ENCODE measurements at regions of chr1 and their contacts with region 1.

Region 1: GRCh38 chr1:85692730-85693314 is 15.4 kb downstream of the ZNHIT6 start:
- DNase-seq: no peak
- ATAC-seq: no peak
- H3K4me3 Mint-ChIP-seq: no peak overlapping the region
- H3K27ac Mint-ChIP-seq: peak overlapping the region; percentile 4
- H3K4me1 Mint-ChIP-seq: no peaks in the 10 kb centered on the region
- H3K27me3 Mint-ChIP-seq: no peaks in the 10 kb centered on the region
- CTCF ChIP-seq: no peak

Region 2: GRCh38 chr1:85344256-85344694 is 348.5 kb before region 1 on chr1:
- CTCF ChIA-PET with region 1: interaction called, 10 read pairs
- POLR2A ChIA-PET with region 1: no interaction called
- DNase-seq: peak; percentile 71
- ATAC-seq: peak; percentile 99
- H3K4me3 Mint-ChIP-seq: no peak overlapping the region
- H3K27ac Mint-ChIP-seq: peak overlapping the region; percentile 92
- H3K4me1 Mint-ChIP-seq: peaks cover 58% of the 10 kb centered on the region
- H3K27me3 Mint-ChIP-seq: no peaks in the 10 kb centered on the region
- CTCF ChIP-seq: 0 out of 2 replicates have a peak, but pooled peaks have one; percentile 27

Region 3: GRCh38 chr1:85612704-85613361 is 80.0 kb before region 1 on chr1:
- CTCF ChIA-PET with region 1: interaction called, 10 read pairs
- POLR2A ChIA-PET with region 1: no interaction called
- DNase-seq: no peak
- ATAC-seq: peak; percentile 73
- H3K4me3 Mint-ChIP-seq: no peak overlapping the region
- H3K27ac Mint-ChIP-seq: peak overlapping the region; percentile 17
- H3K4me1 Mint-ChIP-seq: peaks cover 25% of the 10 kb centered on the region
- H3K27me3 Mint-ChIP-seq: no peaks in the 10 kb centered on the region
- CTCF ChIP-seq: no peak

Region 4: DNA sequence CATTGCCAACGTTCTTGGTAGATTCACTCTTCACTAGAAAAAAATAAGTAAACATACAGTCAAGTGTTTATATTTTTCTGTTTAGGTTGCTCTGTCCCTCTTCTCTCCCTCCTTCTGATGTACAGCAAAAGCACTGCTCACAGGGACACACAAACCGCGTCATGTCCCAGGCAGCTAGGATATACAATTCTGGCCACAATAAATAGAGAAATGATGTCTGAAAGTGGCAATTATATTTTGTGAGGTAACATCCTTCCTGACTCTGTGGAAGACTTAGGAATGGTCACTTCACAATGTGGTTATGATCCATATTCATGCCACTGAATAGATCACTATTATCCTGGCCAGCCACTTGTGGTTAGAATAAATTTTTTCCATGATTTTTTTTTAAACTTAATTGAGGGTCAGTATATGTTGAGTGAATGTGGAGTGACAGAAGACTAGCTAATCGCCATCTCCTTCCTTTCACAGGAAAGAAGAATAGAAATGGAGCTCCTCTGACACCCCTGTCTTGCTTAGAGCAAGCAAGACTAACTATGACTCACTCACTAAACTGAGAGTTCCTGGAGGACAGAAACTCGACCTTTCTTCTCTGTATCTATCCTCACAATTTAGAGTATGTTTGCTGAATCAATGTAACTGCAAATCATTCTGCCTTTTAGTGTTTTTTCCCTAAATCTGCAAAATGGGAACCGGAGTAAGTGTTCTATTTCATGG is 38.6 kb before region 1 on chr1:
- CTCF ChIA-PET with region 1: no interaction called
- POLR2A ChIA-PET with region 1: no interaction called
- DNase-seq: no peak
- ATAC-seq: no peak
- H3K4me3 Mint-ChIP-seq: no peak overlapping the region
- H3K27ac Mint-ChIP-seq: peak overlapping the region; percentile 80; the same call in 1 of the 2 replicates
- H3K4me1 Mint-ChIP-seq: peaks cover 13% of the 10 kb centered on the region
- H3K27me3 Mint-ChIP-seq: no peaks in the 10 kb centered on the region
- CTCF ChIP-seq: no peak

Region 5: DNA sequence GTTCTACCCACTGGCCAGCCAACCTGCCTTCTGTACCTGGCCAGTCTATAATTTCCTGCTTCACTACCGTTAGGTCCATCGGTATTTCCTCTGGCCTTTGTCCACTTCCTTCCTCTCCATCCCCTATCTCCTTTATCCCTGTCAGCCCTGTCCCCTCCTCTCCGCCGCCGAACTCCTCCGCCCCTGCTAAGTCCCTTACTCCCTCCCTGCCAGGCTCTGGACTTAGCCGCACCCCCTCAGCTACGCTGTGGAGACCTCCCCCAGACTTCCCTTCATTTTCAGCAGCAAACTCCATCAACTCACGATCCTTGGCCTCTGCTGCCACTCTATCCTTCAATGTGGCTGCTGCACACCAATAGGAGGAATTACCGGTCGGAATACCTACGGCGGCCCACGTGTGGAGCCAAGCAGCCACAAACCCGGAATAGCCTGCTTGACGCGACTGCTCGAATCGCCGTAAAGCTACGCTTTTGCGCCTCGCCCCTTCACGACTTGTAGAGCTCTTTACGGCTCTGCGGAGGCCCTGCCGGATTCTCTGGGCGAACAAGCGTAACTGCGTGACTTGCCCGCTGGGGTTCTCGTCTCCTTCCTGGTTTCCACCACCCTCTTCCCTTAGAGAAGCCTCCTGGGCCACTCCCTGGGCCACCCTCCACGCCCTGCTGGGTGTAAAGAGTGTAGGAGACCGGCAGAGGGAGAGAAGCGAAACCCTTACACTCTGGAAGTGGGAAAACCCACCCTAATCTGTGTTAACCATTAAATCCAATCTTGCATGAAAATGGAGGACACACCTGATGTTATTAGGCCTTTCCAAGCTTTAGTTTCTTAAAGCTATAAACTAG is 15.4 kb after region 1 on chr1 and contains the start of gene ZNHIT6:
- CTCF ChIA-PET with region 1: interaction called, 11 read pairs
- POLR2A ChIA-PET with region 1: no interaction called
- DNase-seq: peak; percentile 89
- ATAC-seq: peak; percentile 88
- H3K4me3 Mint-ChIP-seq: no peak within 1 kb of the TSS
- H3K27ac Mint-ChIP-seq: no peak within 1 kb of the TSS
- H3K4me1 Mint-ChIP-seq: no peaks in the 10 kb centered on the region
- H3K27me3 Mint-ChIP-seq: no peaks in the 10 kb centered on the region; the same call in 1 of the 2 replicates
- CTCF ChIP-seq: no peak
- total RNA-seq, gene ZNHIT6: 14.3 to 16.4 TPM (median 15.9 TPM) in 3 replicates

Measured in WTC11 (cell line).